IMR-90 (cell line): ENCODE measurements at regions of chr7 and their contacts with region 1.

Region 1: DNA sequence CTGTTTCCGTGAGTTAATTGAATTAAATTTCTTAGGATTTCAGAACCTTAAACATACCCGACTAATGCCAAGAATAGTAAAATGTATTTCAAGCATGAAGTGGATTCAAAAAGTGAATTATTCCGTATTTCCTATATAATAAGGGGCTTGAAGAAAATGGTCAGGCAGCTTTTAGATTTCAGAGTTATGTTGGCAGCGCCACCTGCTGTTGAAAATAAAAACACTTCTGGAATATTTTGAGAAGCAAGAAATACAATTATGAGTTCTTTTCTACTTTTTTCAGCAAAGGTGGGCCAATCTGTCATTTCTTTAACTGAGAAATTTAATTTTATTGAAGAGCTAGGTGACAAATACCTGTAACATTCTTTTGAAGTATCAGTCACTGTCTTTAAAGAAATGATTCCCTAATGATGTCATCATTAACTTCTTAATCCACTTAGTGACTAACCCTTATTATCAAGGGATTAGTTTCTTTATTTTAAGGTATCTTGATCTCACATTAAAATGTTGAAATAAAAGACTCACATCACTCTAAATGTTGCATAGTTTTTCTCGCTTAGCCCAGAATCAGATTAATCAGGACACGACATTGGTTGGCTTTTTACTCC is 36.6 kb upstream of the AGR3 start:
- DNase-seq: peak; percentile 64
- ATAC-seq: no peak
- H3K4me3 ChIP-seq: no peak overlapping the region
- H3K27ac ChIP-seq: no peak overlapping the region
- H3K4me1 ChIP-seq: peaks cover 11% of the 10 kb centered on the region
- H3K27me3 ChIP-seq: no peaks in the 10 kb centered on the region
- CTCF ChIP-seq: peak; percentile 69
- POLR2A ChIP-seq: no peak
- RAD21 ChIP-seq: peak; percentile 62

Region 2: DNA sequence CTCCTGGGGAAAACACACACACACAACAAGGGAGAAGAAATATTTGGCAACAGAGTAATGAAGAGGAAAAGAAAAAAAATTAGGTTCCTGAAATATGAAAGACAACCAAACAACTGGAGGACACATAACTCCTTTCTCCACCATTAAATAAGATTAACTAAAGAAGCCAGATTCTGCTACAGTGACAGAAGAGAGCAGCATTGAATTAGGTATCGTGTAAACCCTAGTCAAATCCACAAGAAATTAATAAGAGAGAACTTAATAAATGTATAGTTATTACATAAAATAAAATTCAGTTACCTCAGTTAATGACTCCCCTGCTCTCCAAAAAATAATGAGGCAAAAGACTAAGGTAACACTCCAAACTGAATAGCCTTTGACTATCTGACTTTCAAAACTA is 803.8 kb before region 1 on chr7:
- CTCF ChIA-PET with region 1: no interaction called
- POLR2A ChIA-PET with region 1: no interaction called
- dilution Hi-C with region 1: no loop called
- in situ Hi-C with region 1: loop called (anchors 25 kb)
- intact Hi-C with region 1: no loop called
- DNase-seq: peak; percentile 59
- ATAC-seq: peak; percentile 70; the same call in 1 of the 2 replicates
- H3K4me3 ChIP-seq: no peak overlapping the region
- H3K27ac ChIP-seq: no peak overlapping the region
- H3K4me1 ChIP-seq: no peaks in the 10 kb centered on the region
- H3K27me3 ChIP-seq: no peaks in the 10 kb centered on the region
- CTCF ChIP-seq: peak; percentile 66
- POLR2A ChIP-seq: no peak
- RAD21 ChIP-seq: peak; percentile 76

Region 3: GRCh38 chr7:16609842-16610450 is 308.4 kb before region 1 on chr7:
- CTCF ChIA-PET with region 1: no interaction called
- POLR2A ChIA-PET with region 1: no interaction called
- dilution Hi-C with region 1: no loop called
- in situ Hi-C with region 1: loop called (anchors 25 kb)
- intact Hi-C with region 1: loop called (anchors 5 kb)
- DNase-seq: no peak
- ATAC-seq: no peak
- H3K4me3 ChIP-seq: no peak overlapping the region
- H3K27ac ChIP-seq: no peak overlapping the region
- H3K4me1 ChIP-seq: 0 out of 2 replicates have a peak, but pooled peaks cover 3% of the 10 kb centered on the region
- H3K27me3 ChIP-seq: no peaks in the 10 kb centered on the region
- CTCF ChIP-seq: no peak
- POLR2A ChIP-seq: no peak
- RAD21 ChIP-seq: no peak

Region 4: GRCh38 chr7:16645593-16646471 is 272.6 kb before region 1 on chr7 and contains the starts of genes ANKMY2 and BZW2:
- CTCF ChIA-PET with region 1: no interaction called
- POLR2A ChIA-PET with region 1: no interaction called
- dilution Hi-C with region 1: no loop called
- in situ Hi-C with region 1: no loop called
- intact Hi-C with region 1: loop called (anchors 5 kb)
- DNase-seq: peak; percentile 97
- ATAC-seq: peak; percentile 92
- H3K4me3 ChIP-seq: peak within 1 kb of the TSS; percentile 74
- H3K27ac ChIP-seq: peak within 1 kb of the TSS; percentile 93
- H3K4me1 ChIP-seq: peaks cover 6% of the 10 kb centered on the region
- H3K27me3 ChIP-seq: no peaks in the 10 kb centered on the region
- CTCF ChIP-seq: no peak
- POLR2A ChIP-seq: peak; percentile 98
- RAD21 ChIP-seq: 0 out of 2 replicates have a peak, but pooled peaks have one; percentile 7
- total RNA-seq, gene ANKMY2: 41.9 and 43.6 TPM in 2 replicates
- total RNA-seq, gene BZW2: 58.1 and 65.0 TPM in 2 replicates

Region 5: DNA sequence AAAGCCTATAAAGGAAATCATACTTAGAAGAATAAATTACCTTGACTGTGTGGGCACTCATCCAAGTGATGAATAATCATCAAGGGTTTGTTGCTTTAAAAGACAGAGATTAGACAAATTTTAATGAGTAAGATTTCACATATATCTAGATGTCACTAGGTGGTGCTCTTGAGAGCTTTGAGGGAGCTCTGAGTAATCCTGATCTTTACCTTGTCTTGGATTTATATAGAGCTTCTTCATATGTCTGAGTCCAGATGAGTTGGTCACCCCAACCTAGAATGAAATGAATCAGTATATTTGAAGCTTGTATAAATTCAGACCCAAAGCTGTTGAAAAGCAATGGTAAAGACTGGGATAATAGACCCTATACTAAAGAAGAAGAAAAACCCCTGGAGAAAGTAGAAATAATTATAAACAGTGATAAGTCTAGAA is 117.3 kb before region 1 on chr7:
- CTCF ChIA-PET with region 1: interaction called, 3 read pairs
- POLR2A ChIA-PET with region 1: no interaction called
- dilution Hi-C with region 1: no loop called
- in situ Hi-C with region 1: no loop called
- intact Hi-C with region 1: loop called (anchors 2 kb)
- DNase-seq: peak; percentile 83
- ATAC-seq: peak; percentile 93
- H3K4me3 ChIP-seq: no peak overlapping the region
- H3K27ac ChIP-seq: no peak overlapping the region
- H3K4me1 ChIP-seq: no peaks in the 10 kb centered on the region; the same call in 1 of the 2 replicates
- H3K27me3 ChIP-seq: no peaks in the 10 kb centered on the region; the same call in none of the 2 replicates
- CTCF ChIP-seq: peak; percentile 60
- POLR2A ChIP-seq: no peak
- RAD21 ChIP-seq: peak; percentile 55

Region 6: GRCh38 chr7:16905300-16906044 is 12.9 kb before region 1 on chr7:
- CTCF ChIA-PET with region 1: interaction called, 6 read pairs
- POLR2A ChIA-PET with region 1: no interaction called
- dilution Hi-C with region 1: no loop called
- in situ Hi-C with region 1: no loop called
- intact Hi-C with region 1: loop called (anchors 1 kb)
- DNase-seq: peak; percentile 77
- ATAC-seq: peak; percentile 91
- H3K4me3 ChIP-seq: no peak overlapping the region
- H3K27ac ChIP-seq: no peak overlapping the region
- H3K4me1 ChIP-seq: 0 out of 2 replicates have a peak, but pooled peaks cover 1% of the 10 kb centered on the region
- H3K27me3 ChIP-seq: no peaks in the 10 kb centered on the region
- CTCF ChIP-seq: no peak
- POLR2A ChIP-seq: no peak
- RAD21 ChIP-seq: no peak